Activated CD4-positive, alpha-beta memory T cell treated with anti-CD3 and anti-CD28 coated beads for 36 hours (primary cell): ENCODE measurements at regions of chr17 and their contacts with region 1.

Region 1: GRCh38 chr17:35879773-35880654 is at the start of gene CCL5:
- DNase-seq: peak; percentile 75
- H3K4me3 Mint-ChIP-seq: peak within 1 kb of the TSS; percentile 69
- H3K27ac Mint-ChIP-seq: peak within 1 kb of the TSS; percentile 97
- H3K4me1 Mint-ChIP-seq: peaks cover 47% of the 10 kb centered on the region
- H3K27me3 Mint-ChIP-seq: no peaks in the 10 kb centered on the region
- total RNA-seq, gene CCL5: 120 to 133 TPM

Region 2: DNA sequence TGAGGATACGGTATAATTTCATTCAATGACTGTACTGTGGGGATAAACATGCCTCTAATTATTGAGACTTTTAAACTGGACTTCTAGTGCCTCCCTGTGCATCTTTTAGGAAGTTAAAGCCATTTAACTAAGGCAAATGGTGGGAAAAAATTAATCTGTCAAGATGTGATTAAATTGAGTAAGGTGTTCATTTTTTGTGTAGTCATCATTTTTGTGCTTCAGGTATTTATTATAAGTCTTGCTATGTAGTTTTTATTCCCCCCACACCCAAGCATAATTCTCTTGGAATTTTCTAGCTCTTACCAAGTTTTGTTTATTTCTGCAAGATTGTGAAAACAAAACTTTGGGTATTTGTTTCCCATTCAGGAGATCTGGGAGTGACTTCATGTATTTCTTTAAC is 60.6 kb before region 1 on chr17:
- CTCF ChIA-PET with region 1: no interaction called
- POLR2A ChIA-PET with region 1: no interaction called
- intact Hi-C with region 1: no loop called
- DNase-seq: no peak
- H3K4me3 Mint-ChIP-seq: no peak overlapping the region
- H3K27ac Mint-ChIP-seq: no peak overlapping the region
- H3K4me1 Mint-ChIP-seq: peaks cover 32% of the 10 kb centered on the region
- H3K27me3 Mint-ChIP-seq: no peaks in the 10 kb centered on the region

Region 3: DNA sequence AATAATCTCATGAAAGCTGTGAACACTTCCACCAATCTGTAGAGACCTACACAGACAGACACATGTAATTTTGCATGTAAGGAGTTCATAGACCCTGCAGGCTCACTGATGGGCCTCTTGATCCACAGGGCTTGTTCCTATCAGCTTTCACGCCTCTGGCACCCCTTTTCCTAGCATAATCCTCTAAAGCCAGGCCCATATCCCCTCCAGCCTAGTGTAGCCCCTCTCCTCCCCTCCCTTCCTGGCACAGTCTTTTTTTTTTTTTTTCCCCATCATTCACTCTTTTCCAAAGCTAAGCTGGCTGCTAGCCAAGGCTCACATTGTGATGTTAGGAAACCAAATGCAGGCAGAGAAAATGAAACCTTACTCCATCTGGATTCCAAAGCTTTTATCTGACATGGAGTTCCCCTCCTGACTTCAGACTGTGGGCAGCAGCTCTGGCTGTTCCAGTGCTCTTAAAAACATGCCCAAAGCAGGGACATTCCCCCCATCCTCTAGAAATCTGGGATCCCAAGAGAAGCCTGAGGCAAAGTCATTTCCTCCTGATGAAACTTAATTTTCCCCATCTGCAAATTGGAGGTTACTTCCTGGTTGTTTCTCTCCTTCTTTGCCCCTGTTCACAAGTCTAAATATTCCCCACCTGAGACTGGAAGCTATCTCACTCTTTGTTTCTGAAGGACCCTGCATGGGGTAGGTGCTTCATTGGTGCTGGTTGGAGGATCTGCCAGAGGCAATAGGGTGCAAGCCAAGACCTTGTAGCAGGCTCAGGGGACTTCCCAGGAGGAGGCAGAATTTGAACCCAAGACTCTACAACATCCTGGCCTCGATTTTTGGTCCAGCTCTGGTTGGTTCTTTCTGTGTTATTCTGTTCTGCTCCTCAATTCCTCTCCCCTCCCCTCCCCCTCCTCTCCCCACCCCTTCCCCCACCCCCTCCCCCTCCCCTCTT is 10.1 kb after region 1 on chr17:
- CTCF ChIA-PET with region 1: interaction called, 17 read pairs
- POLR2A ChIA-PET with region 1: interaction called, 23 read pairs
- intact Hi-C with region 1: loop called (anchors 1 kb)
- DNase-seq: no peak
- H3K4me3 Mint-ChIP-seq: no peak overlapping the region
- H3K27ac Mint-ChIP-seq: no peak overlapping the region
- H3K4me1 Mint-ChIP-seq: peaks cover 50% of the 10 kb centered on the region
- H3K27me3 Mint-ChIP-seq: no peaks in the 10 kb centered on the region

Region 4: DNA sequence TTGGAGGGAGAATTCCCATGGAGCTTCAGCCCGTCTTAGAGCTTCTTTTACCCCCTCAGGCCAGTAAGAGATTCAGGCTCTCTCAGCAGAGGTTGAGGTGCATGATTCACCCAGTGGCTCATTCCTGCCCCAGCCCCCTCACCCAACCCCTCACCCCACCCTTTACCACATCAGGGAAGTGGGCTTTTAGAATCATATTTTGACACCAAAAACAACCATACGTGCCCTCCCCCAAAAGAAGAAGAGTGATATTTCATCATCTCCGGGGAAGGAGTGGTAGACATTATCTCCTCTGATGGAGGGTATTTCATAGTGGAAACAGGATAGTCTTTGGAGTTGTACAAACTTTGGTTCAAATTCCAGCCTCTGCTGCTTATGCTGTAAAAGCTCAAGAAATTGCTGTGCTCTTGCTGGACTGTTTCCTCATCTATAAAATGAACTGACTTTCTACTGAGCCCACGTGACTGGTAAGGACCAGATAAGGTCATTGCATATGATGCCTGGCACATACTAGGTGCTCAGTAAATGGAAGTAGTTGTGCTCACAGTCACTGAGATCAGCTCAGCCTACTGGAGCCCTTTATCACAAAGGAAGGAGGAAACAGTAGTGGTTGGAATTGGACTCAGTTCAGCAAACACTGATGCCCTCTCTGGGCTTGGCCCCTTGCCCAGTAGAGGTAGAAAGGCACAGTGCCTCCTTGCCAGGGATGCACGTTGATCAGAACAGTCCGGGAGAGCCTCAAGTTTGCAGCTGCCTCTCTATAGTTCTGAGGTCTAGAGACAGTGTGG is 18.5 kb after region 1 on chr17:
- CTCF ChIA-PET with region 1: interaction called, 17 read pairs
- POLR2A ChIA-PET with region 1: interaction called, 23 read pairs
- intact Hi-C with region 1: loop called (anchors 1 kb)
- DNase-seq: peak; percentile 77
- H3K4me3 Mint-ChIP-seq: peak overlapping the region; percentile 46
- H3K27ac Mint-ChIP-seq: peak overlapping the region; percentile 78
- H3K4me1 Mint-ChIP-seq: peaks cover 39% of the 10 kb centered on the region
- H3K27me3 Mint-ChIP-seq: no peaks in the 10 kb centered on the region

Region 5: GRCh38 chr17:35930211-35931065 is 50.4 kb after region 1 on chr17 and contains the start of gene RDM1:
- CTCF ChIA-PET with region 1: no interaction called
- POLR2A ChIA-PET with region 1: interaction called, 6 read pairs
- intact Hi-C with region 1: loop called (anchors 2 kb)
- DNase-seq: peak; percentile 94
- H3K4me3 Mint-ChIP-seq: peak within 1 kb of the TSS; percentile 79
- H3K27ac Mint-ChIP-seq: peak within 1 kb of the TSS; percentile 62
- H3K4me1 Mint-ChIP-seq: peaks cover 23% of the 10 kb centered on the region
- H3K27me3 Mint-ChIP-seq: peaks cover 2% of the 10 kb centered on the region
- total RNA-seq, gene RDM1: 10.4 to 10.6 TPM

Region 6: GRCh38 chr17:36089888-36090836 is 210.1 kb after region 1 on chr17 and contains the start of gene CCL3:
- CTCF ChIA-PET with region 1: no interaction called
- POLR2A ChIA-PET with region 1: no interaction called
- intact Hi-C with region 1: loop called (anchors 1 kb)
- DNase-seq: peak; percentile 79
- H3K4me3 Mint-ChIP-seq: peak within 1 kb of the TSS; percentile 64
- H3K27ac Mint-ChIP-seq: peak within 1 kb of the TSS; percentile 74
- H3K4me1 Mint-ChIP-seq: peaks cover 56% of the 10 kb centered on the region
- H3K27me3 Mint-ChIP-seq: peaks cover 26% of the 10 kb centered on the region
- total RNA-seq, gene CCL3: 981 to 989 TPM

Region 7: GRCh38 chr17:36107660-36108059 is 227.6 kb after region 1 on chr17:
- CTCF ChIA-PET with region 1: no interaction called
- POLR2A ChIA-PET with region 1: no interaction called
- intact Hi-C with region 1: no loop called
- DNase-seq: no peak
- H3K4me3 Mint-ChIP-seq: no peak overlapping the region
- H3K27ac Mint-ChIP-seq: no peak overlapping the region
- H3K4me1 Mint-ChIP-seq: peaks cover 16% of the 10 kb centered on the region
- H3K27me3 Mint-ChIP-seq: peaks cover 19% of the 10 kb centered on the region